Dendritic cell treated with granulocyte-macrophage colony-stimulating factor and Interleukin-4, amounts not matched to agents 40 ng/mL and 50 ng/mL, for 4 days (primary cell): ENCODE measurements at regions of chr19 and their contacts with region 1.

Region 1: DNA sequence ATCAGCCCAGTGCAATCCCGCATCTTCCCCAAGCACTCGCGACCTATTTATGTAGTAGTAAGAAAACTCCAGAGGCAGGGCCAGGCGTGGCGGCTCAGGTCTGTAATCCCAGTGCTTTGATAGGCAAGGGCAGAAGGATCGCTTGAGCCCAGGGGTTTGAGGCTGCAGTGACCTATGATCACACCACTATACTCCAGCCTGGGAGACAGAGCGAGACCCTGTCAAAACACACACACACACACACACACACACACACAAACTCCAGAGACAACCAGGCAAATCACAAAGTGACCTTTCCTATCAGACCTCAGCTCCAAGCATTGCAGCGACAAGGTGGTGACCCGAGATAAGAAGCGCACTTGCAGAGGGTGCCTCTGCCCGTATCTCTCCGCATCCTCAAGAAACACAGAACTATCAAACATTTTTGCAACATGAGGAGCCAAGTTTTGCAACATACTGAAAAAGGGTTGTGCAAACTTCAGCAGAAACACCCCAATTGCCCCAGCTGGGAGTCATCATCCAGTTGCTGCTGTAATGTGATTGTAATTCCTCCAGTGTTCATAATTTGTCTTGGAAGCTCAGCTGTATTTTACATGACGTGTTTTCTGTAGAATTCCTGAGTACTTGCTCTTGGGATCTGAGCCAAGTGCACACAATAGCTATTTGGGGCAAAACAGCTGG is 8.7 kb upstream of the KLF2 start:
- H3K4me3 Mint-ChIP-seq: peak overlapping the region; percentile 62
- H3K27ac Mint-ChIP-seq: peak overlapping the region; percentile 94
- H3K4me1 Mint-ChIP-seq: peaks cover 45% of the 10 kb centered on the region
- H3K27me3 Mint-ChIP-seq: peaks cover 24% of the 10 kb centered on the region

Region 2: GRCh38 chr19:16283210-16284061 is 32.5 kb before region 1 on chr19:
- intact Hi-C with region 1: loop called (anchors 5 kb)
- H3K4me3 Mint-ChIP-seq: peak overlapping the region; percentile 57
- H3K27ac Mint-ChIP-seq: peak overlapping the region; percentile 98
- H3K4me1 Mint-ChIP-seq: peaks cover 73% of the 10 kb centered on the region
- H3K27me3 Mint-ChIP-seq: peaks cover 10% of the 10 kb centered on the region